Activated CD8-positive, alpha-beta T cell treated with anti-CD3 and anti-CD28 coated beads for 36 hours (primary cell): ENCODE measurements at regions of chr11 and their contacts with region 1.

Region 1: GRCh38 chr11:128512474-128512996 is 74.8 kb downstream of the ETS1 start:
- DNase-seq: peak; percentile 71
- ATAC-seq: peak; percentile 65
- H3K4me3 Mint-ChIP-seq: peak overlapping the region; percentile 95
- H3K27ac Mint-ChIP-seq: peak overlapping the region; percentile 96
- H3K4me1 Mint-ChIP-seq: peaks cover 67% of the 10 kb centered on the region
- H3K27me3 Mint-ChIP-seq: no peaks in the 10 kb centered on the region
- CTCF ChIP-seq: no peak

Region 2: DNA sequence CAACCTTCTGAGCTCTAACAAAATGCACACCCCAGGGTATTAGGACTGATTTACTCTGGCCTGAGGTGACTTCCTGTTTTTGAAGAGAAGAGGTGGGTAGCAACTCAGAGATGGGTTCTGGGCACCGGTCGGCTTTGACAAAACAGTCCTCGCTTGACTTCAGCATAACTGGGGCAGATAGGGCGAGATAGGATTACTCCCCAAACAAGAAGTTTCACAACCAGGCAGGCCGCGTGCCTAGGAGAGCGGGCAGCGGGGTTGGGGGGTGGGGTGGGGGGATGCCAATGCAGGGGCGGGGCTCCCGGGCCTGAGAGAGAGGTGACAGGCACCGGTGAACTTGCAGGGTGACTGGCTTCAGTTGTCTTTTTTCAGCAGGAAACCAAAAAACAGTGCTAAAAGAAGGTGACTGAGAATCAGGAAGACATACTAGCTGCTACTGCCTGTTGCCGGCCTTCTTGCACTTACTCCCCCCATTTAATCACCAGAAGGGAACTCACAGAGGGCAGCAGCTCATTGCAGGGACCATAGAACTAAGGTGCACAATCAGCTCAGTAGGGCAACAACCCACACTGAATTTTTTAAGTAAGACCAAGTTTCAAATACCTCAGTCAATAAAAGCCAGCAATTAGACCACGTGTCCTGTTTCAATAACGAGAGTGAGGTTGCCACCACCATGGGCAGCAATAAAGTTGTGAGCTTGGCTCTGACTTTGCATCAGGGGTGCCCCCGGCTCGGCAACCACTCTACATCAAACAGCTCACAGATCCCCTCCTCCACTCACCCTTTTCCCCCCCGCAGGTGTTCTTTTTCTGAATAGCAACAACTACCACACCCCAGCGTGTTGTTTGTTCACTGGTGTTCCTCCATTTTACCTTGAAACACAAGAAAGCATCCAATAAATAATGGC is 112.0 kb after region 1 on chr11:
- CTCF ChIA-PET with region 1: interaction called, 400 read pairs
- POLR2A ChIA-PET with region 1: interaction called, 78 read pairs
- intact Hi-C with region 1: no loop called
- DNase-seq: peak; percentile 77
- ATAC-seq: peak; percentile 57
- H3K4me3 Mint-ChIP-seq: peak overlapping the region; percentile 56
- H3K27ac Mint-ChIP-seq: peak overlapping the region; percentile 94
- H3K4me1 Mint-ChIP-seq: peaks cover 97% of the 10 kb centered on the region
- H3K27me3 Mint-ChIP-seq: no peaks in the 10 kb centered on the region
- CTCF ChIP-seq: no peak